Activated CD4-positive, alpha-beta T cell treated with anti-CD3 and anti-CD28 coated beads for 36 hours (primary cell): ENCODE measurements at regions of chr19 and their contacts with region 1.

Region 1: GRCh38 chr19:6718741-6719539 is 1.5 kb downstream of the C3 start:
- DNase-seq: peak; percentile 59
- ATAC-seq: peak; percentile 82
- H3K4me3 Mint-ChIP-seq: no peak overlapping the region
- H3K27ac Mint-ChIP-seq: no peak overlapping the region
- H3K4me1 Mint-ChIP-seq: peaks cover 15% of the 10 kb centered on the region
- H3K27me3 Mint-ChIP-seq: peaks cover 8% of the 10 kb centered on the region

Region 2: GRCh38 chr19:6705931-6706632 is 12.9 kb before region 1 on chr19:
- CTCF ChIA-PET with region 1: no interaction called
- POLR2A ChIA-PET with region 1: no interaction called
- intact Hi-C with region 1: no loop called
- DNase-seq: no peak
- ATAC-seq: no peak
- H3K4me3 Mint-ChIP-seq: no peak overlapping the region
- H3K27ac Mint-ChIP-seq: no peak overlapping the region
- H3K4me1 Mint-ChIP-seq: peaks cover 10% of the 10 kb centered on the region
- H3K27me3 Mint-ChIP-seq: peaks cover 23% of the 10 kb centered on the region

Region 3: DNA sequence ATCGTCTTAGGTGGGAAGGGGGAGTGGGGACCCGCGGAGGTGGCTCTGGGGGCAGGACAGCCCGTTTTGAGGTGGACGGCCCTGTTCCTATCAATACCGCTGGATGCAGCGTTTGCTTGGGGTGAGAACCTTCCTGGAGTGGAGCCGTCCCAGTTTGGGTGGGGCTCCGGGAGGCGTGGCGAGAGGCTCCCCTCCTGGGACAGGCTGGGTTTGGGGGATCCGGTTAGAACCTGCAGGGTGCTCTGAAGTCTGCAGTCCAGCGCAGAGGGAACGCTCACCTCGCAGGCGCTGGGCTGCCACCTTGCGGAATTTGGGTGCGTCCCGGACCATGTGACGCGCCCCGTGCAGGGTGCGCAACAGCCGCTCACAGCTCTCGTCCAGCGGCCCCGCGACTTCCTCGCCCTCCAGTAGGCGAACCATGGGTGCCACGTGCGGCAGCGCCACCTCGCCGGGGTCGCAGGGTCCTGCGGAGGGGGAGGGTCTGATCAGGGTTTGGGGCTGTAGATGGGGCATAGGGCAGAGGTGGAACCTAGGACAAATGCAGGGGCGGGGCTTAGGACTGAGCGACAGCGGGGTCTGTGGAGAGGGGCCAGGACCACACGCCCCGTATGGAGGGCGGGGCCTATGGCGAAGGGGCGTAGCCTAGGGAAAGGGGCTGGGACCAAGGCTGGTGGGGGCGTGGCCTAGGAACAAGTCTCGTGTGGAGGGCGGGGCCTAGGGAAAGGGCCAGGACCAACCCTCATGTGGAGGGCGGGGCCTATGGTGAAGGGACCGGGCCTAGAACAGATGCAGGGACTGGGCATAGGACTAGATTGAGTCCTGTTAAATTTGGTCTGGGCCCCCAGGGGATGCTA is 34.5 kb after region 1 on chr19:
- CTCF ChIA-PET with region 1: no interaction called
- POLR2A ChIA-PET with region 1: no interaction called
- intact Hi-C with region 1: loop called in 1 of 2 experiments (anchors 1 kb)
- DNase-seq: peak; percentile 93
- ATAC-seq: peak; percentile 94
- H3K4me3 Mint-ChIP-seq: peak overlapping the region; percentile 59
- H3K27ac Mint-ChIP-seq: peak overlapping the region; percentile 47
- H3K4me1 Mint-ChIP-seq: peaks cover 13% of the 10 kb centered on the region
- H3K27me3 Mint-ChIP-seq: no peaks in the 10 kb centered on the region

Region 4: DNA sequence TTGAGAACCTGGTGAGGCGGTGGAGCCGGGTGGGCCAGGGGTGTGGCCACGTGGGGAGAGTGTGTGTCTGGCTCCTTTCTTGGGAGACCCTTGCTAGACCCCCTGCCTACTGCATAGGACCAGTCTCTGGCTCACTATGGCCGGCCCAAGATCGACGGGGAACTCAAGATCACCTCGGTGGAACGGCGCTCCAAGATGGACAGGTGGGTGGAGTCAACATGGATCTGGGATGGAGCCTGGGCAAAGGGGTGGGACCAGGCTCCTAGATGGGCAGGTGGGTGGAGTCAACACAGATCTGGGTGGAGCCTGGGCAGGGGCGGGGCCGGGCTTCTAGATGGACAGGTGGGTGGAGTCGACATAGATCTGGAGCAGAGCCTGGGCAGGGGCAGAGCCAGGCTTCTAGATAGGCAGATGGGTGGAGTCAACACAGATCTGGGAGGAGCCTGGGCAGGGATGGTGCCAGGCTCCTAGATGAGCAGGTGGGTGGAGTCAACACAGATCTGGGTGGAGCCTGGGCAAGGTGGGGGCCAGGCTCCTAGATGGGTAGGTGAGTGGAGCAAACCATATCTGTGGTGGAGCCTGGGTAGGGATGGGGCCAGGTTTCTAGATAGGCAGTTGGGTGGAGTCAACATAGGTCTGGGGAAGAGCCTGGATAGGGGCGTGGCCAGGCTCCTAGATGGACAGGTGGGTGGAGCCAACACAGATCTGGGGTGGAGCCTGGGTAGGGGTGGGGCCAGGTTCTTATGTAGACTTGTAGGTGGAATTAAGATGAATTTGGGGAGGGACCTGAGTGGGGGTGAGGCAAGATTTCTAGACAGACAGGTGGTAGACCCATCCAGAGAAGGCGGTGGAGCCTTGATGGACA is 110.0 kb after region 1 on chr19:
- CTCF ChIA-PET with region 1: no interaction called
- POLR2A ChIA-PET with region 1: no interaction called
- intact Hi-C with region 1: loop called in 1 of 2 experiments (anchors 1 kb)
- DNase-seq: peak; percentile 80
- ATAC-seq: peak; percentile 91
- H3K4me3 Mint-ChIP-seq: no peak overlapping the region
- H3K27ac Mint-ChIP-seq: peak overlapping the region; percentile 72
- H3K4me1 Mint-ChIP-seq: peaks cover 8% of the 10 kb centered on the region
- H3K27me3 Mint-ChIP-seq: no peaks in the 10 kb centered on the region